AG04450 (cell line): ENCODE measurements at regions of chr6 and their contacts with region 1.

Region 1: DNA sequence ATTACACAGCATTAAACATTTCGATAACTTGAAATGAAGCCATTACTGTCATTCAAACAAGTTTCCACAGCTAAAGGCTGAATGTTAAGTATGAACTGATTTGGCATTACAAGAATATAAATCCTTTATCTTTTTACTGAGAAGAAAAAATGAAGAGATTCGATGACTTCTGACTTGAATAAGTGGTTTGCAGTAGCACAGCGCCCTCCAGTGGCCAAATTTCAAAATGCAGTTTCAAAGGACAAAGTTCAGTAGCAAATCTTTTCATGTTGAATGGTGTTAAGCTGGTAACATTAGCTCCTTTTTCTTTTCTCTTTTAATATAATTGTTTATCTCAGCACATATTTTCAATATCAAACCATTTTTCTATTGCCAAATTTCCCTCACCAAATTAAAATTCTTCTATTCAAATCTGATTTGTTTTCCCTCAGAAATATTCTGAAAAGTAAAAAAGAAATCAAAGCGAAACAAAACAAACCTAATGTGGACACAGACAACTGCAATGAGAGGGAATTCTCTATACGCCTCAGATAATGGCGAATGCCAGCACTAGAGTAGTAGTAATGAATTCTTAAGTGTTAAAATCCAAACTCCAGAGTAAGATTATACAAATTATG is 145.7 kb downstream of the BTBD9 start:
- DNase-seq: peak; percentile 63
- H3K4me3 ChIP-seq: no peak overlapping the region
- H3K27ac ChIP-seq: no peak overlapping the region
- H3K27me3 ChIP-seq: no peaks in the 10 kb centered on the region
- CTCF ChIP-seq: peak; percentile 81

Region 2: GRCh38 chr6:37705239-37706051 is 788.6 kb before region 1 on chr6:
- CTCF ChIA-PET with region 1: interaction called, 16 read pairs
- POLR2A ChIA-PET with region 1: no interaction called
- DNase-seq: no peak
- H3K4me3 ChIP-seq: peak overlapping the region; percentile 50
- H3K27ac ChIP-seq: peak overlapping the region; percentile 43
- H3K27me3 ChIP-seq: no peaks in the 10 kb centered on the region
- CTCF ChIP-seq: peak; percentile 69

Region 3: DNA sequence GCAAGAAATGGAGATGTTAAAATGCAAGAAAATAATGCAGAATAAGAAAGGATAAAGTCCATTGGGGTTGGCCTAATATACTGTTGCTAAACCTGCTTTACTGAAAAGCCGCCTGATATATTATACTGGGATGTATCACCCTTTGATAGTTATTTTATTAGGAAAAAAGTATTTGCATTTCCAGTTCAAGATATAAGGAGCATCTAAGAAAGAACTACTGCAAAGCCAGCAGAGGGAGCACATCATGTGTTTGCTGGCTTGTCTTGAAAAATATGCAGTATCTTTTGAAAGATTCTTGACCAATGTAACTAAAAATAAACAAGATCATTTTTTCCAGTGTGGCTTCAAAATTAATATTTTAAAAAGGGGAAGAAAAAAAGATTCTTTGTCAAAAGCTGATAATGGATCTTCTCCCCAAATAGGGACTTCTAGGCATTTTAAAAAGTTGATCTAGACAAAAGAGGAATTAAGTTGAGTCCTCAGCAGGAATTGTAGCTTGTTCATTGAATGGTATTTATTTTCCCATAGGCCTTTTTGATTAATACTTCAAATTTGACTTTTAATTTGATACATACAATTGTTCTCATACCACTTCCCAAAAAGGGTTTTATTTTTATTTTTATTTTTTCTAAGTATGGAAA is 459.6 kb before region 1 on chr6:
- CTCF ChIA-PET with region 1: interaction called, 52 read pairs
- POLR2A ChIA-PET with region 1: no interaction called
- DNase-seq: peak; percentile 34
- H3K4me3 ChIP-seq: no peak overlapping the region
- H3K27ac ChIP-seq: no peak overlapping the region
- H3K27me3 ChIP-seq: no peaks in the 10 kb centered on the region
- CTCF ChIP-seq: peak; percentile 80

Region 4: DNA sequence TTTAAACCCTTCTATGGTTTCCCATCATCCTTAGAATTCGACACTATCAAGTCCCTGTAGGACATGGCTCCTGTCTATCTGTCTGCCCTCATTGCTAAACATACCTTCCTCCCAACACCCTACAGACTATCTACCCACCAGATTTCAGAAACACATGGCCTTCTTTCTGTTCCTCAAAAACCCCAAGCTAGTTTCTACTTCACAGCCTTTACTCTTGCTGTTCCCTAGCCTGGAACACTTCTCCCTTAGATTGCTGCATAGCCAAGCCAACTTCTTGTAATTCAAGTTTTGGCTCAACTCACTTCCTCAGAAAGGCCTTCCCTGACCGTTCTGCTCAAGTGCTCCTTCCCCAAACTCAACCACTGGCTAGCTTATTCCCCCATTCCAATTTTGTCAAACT is 10.5 kb before region 1 on chr6:
- CTCF ChIA-PET with region 1: interaction called, 22 read pairs
- POLR2A ChIA-PET with region 1: no interaction called
- DNase-seq: no peak
- H3K4me3 ChIP-seq: no peak overlapping the region
- H3K27ac ChIP-seq: no peak overlapping the region
- H3K27me3 ChIP-seq: no peaks in the 10 kb centered on the region
- CTCF ChIP-seq: no peak

Region 5: DNA sequence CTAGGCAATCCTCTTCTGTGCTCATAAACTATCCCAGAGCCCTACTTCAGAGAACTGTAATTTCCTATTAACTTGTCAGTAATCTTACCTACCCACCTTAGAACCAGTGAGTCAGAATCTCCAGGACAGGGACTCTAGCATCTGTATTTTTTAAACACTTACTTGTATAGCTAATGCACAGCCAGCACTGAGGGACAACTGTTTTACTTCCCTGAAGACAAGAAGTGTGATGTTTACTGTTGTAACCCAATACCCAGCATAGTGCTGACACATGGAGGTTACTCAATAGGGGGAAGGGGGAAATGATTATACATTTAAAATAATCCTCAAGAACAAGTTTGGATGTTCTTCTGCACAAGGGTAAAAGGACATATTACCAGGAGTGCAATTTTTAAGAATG is 14.9 kb after region 1 on chr6:
- CTCF ChIA-PET with region 1: interaction called, 22 read pairs
- POLR2A ChIA-PET with region 1: no interaction called
- DNase-seq: peak; percentile 37
- H3K4me3 ChIP-seq: no peak overlapping the region
- H3K27ac ChIP-seq: no peak overlapping the region
- H3K27me3 ChIP-seq: no peaks in the 10 kb centered on the region
- CTCF ChIP-seq: no peak

Region 6: GRCh38 chr6:38554700-38555413 is 60.8 kb after region 1 on chr6:
- CTCF ChIA-PET with region 1: interaction called, 12 read pairs
- POLR2A ChIA-PET with region 1: no interaction called
- DNase-seq: no peak
- H3K4me3 ChIP-seq: no peak overlapping the region
- H3K27ac ChIP-seq: no peak overlapping the region
- H3K27me3 ChIP-seq: no peaks in the 10 kb centered on the region
- CTCF ChIP-seq: no peak

Region 7: GRCh38 chr6:38570750-38571149 is 76.7 kb after region 1 on chr6:
- CTCF ChIA-PET with region 1: interaction called, 21 read pairs
- POLR2A ChIA-PET with region 1: no interaction called
- DNase-seq: no peak
- H3K4me3 ChIP-seq: no peak overlapping the region
- H3K27ac ChIP-seq: no peak overlapping the region
- H3K27me3 ChIP-seq: no peaks in the 10 kb centered on the region
- CTCF ChIP-seq: peak; percentile 55

Region 8: DNA sequence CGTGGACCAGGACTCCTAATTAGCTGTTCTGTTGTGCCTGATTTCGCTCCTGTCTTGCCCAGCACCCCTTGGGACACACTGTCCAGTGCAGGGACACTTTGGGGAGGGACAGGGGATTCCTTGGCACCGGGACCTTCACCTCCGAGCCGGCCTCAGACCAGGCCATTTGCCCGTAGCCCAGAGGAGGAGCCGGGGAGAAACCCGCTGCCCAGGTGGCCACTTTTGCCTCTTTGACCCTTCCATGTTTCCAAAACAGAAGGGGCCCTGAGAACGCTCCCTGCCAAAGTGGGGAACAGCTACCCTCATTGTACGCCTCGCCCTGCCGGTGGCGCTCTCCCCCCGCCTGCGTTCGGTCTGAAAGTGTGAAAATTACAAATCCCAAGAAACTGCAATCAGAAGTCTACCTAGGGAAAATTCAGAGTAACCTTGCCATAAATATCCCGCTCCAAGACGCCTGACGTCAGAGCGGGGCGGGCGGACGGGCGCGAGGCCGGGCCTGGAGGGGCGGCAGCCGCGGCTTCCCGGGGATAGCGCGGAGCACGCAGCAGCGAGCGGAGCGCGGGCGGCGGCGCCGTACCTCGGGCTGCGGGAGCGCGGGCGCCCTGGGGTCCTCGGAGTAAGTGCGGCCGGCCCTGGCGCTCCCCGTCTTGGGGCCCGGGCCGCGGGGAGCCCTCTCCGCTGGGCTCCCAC is 1298.0 kb after region 1 on chr6 and contains the start of gene DAAM2:
- CTCF ChIA-PET with region 1: no interaction called
- POLR2A ChIA-PET with region 1: no interaction called
- DNase-seq: no peak
- H3K4me3 ChIP-seq: peak within 1 kb of the TSS; percentile 57
- H3K27ac ChIP-seq: no peak within 1 kb of the TSS
- H3K27me3 ChIP-seq: peaks cover 26% of the 10 kb centered on the region
- CTCF ChIP-seq: 0 out of 2 replicates have a peak, but pooled peaks have one; percentile 18
- polyA plus RNA-seq, gene DAAM2: 2.9 and 3.5 TPM in 2 replicates